Mammary epithelial cell (primary cell): ENCODE measurements at regions of chr2 and their contacts with region 1.

Region 1: DNA sequence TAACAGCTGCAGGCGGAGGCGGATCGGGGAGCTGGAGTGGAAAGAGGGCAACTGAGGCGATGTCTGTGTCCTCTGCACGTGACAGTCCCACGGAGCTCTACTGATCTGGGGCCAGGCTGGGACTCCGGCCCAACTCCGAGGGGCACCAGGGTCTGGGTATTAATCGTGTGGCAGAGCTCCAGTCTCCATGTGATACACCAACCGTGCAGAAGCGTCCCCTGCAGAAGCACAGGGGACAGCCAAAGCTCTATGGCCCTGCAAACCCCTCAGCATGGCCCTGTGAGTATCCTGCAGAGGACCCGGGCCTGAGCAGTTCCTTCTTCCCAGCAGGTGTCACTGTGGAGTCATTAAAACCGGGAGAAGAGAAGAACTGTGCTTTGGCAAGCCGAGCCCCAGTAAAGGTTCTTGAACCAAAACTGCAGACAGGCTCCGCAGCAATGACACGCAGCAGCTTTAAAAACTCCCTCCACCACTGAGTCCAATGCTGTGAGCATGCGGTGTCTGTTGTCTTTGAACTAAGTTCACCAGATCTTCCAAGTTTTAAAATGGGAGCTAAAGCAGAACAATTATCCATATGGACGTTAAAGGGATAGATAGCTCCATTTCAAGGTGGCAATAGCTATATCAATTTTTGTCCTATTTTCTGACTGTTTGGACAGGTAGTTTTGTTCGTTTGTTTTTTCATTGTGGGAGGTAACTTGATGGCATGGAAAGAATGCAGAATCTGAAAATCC is 79.4 kb downstream of the TMEM182 start:
- DNase-seq: peak; percentile 25
- H3K4me3 ChIP-seq: no peak overlapping the region
- H3K27ac ChIP-seq: no peak overlapping the region
- H3K4me1 ChIP-seq: no peaks in the 10 kb centered on the region
- H3K27me3 ChIP-seq: no peaks in the 10 kb centered on the region
- CTCF ChIP-seq: peak; percentile 49 to 65

Region 2: GRCh38 chr2:102806250-102806837 is 34.9 kb before region 1 on chr2:
- CTCF ChIA-PET with region 1: no interaction called
- dilution Hi-C with region 1: no loop called
- in situ Hi-C with region 1: no loop called
- intact Hi-C with region 1: no loop called
- DNase-seq: peak; percentile 58
- H3K4me3 ChIP-seq: no peak overlapping the region
- H3K27ac ChIP-seq: no peak overlapping the region
- H3K4me1 ChIP-seq: peaks cover 8% of the 10 kb centered on the region
- H3K27me3 ChIP-seq: no peaks in the 10 kb centered on the region
- CTCF ChIP-seq: peak; percentile 78 to 87

Region 3: DNA sequence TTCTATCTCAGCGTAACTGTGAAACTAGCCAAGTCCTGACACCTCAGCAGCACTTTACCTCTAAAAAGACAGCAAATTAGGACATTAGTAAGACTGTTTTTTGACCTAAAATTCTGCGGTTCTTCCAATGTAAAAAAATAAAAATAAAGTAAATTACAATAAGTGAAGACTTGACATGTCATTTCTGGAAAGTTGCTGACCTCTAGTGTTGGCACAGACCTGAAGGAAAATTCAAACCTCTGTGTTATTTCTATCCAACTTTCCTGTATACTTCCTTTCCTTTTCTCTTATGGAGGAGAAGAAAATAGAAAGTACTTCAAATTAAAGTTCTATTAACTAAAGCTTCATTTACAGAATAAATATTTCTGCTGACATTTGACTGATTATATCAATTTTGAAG is 31.1 kb after region 1 on chr2:
- CTCF ChIA-PET with region 1: no interaction called
- dilution Hi-C with region 1: no loop called
- in situ Hi-C with region 1: no loop called
- intact Hi-C with region 1: loop called (anchors 2 kb)
- DNase-seq: no peak
- H3K4me3 ChIP-seq: no peak overlapping the region
- H3K27ac ChIP-seq: no peak overlapping the region
- H3K4me1 ChIP-seq: no peaks in the 10 kb centered on the region
- H3K27me3 ChIP-seq: no peaks in the 10 kb centered on the region
- CTCF ChIP-seq: peak in 1 of 2 donors; percentile 18

Region 4: GRCh38 chr2:102932471-102932870 is 91.2 kb after region 1 on chr2:
- CTCF ChIA-PET with region 1: no interaction called
- dilution Hi-C with region 1: no loop called
- in situ Hi-C with region 1: no loop called
- intact Hi-C with region 1: no loop called
- DNase-seq: no peak
- H3K4me3 ChIP-seq: no peak overlapping the region
- H3K27ac ChIP-seq: no peak overlapping the region
- H3K4me1 ChIP-seq: no peaks in the 10 kb centered on the region
- H3K27me3 ChIP-seq: no peaks in the 10 kb centered on the region
- CTCF ChIP-seq: no peak

Region 5: DNA sequence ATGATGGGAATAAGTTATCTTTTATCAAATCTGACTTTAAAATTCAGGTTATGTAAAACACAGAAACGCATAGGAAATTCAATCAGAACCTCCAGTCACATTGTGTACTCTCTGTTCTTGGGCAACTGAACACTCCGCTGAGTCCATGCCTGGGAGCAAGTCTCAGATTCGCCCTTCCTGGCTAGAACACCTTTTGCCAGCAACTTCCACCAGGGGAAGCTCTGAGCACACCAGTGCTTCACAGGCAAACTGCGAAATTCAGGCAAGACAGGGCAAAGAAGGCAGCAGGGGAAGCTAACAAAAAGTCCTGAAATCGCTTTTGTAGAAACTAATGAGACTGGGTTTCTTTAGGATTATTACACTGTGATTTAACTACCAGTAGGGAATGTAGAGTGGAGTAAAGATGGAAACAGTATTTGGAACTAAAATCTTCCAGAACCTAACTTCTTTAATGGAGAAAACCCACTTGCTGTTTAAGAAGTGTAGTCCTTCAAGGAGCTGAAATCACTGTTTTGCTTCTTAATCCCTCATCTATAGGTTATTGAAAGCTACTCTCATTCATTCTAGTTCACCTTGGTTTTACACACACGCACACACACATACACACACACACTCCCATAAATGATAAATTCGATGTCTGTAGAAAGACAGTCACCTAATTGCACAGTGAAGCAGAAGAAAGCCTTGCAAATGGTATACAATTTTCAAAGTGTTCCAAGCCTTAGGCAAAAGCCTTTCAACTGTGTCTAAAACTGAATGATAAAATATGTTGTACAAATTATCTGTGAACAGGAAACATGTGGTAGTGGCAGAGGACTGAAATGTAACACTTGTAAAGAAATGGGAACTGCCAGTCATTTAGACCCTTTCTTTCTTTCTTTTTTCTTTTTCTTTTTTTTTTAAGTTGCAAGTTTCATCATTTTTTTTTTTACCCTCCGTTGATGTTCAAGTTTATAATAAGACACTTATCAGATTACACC is 135.0 kb after region 1 on chr2:
- CTCF ChIA-PET with region 1: no interaction called
- dilution Hi-C with region 1: no loop called
- in situ Hi-C with region 1: no loop called
- intact Hi-C with region 1: loop called (anchors 1 kb)
- DNase-seq: peak; percentile 34
- H3K4me3 ChIP-seq: no peak overlapping the region
- H3K27ac ChIP-seq: no peak overlapping the region
- H3K4me1 ChIP-seq: no peaks in the 10 kb centered on the region
- H3K27me3 ChIP-seq: no peaks in the 10 kb centered on the region
- CTCF ChIP-seq: peak; percentile 46 to 91

Region 6: GRCh38 chr2:103959174-103960128 is 1118.2 kb after region 1 on chr2:
- CTCF ChIA-PET with region 1: no interaction called
- dilution Hi-C with region 1: no loop called
- in situ Hi-C with region 1: no loop called
- intact Hi-C with region 1: loop called (anchors 10 kb)
- DNase-seq: no peak
- H3K4me3 ChIP-seq: no peak overlapping the region
- H3K27ac ChIP-seq: no peak overlapping the region
- H3K4me1 ChIP-seq: no peaks in the 10 kb centered on the region
- H3K27me3 ChIP-seq: no peaks in the 10 kb centered on the region
- CTCF ChIP-seq: peak; percentile 26 to 46